HCT116 (cell line): ENCODE measurements at regions of chr9 and their contacts with region 1.

Region 1: GRCh38 chr9:38692707-38693106 is 27.2 kb downstream of the FAM240B start:
- DNase-seq: no peak
- ATAC-seq: no peak
- H3K4me3 ChIP-seq: no peak overlapping the region
- H3K27ac ChIP-seq: no peak overlapping the region
- H3K4me1 ChIP-seq: peaks cover 3 to 8% of the 10 kb centered on the region in 2 experiments; a peak in 3 of 4 replicates
- H3K27me3 ChIP-seq: no peaks in the 10 kb centered on the region
- CTCF ChIP-seq: no peak
- POLR2A ChIP-seq: no peak
- RAD21 ChIP-seq: no peak

Region 2: DNA sequence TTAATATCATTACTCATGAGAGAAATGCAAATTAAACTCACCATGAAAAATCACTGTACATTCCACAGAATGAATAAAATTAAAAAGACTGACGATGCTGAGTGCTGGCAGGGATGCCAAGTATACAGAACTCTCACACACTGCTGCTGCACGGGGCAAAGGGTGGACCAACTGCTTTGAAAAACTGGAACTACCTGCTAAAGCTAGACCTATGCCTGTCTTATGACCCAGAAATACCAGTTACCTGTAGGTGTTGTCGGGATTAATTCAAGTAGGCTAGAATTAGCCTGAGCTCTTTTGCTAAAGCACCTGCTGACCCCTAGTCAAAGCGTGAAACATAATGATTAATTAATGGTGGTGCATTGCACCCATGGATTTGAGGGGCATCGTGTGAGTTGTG is 35.8 kb before region 1 on chr9:
- CTCF ChIA-PET with region 1: no interaction called
- POLR2A ChIA-PET with region 1: no interaction called
- RAD21 ChIA-PET with region 1: no interaction called
- intact Hi-C with region 1: no loop called
- DNase-seq: no peak
- ATAC-seq: no peak
- H3K4me3 ChIP-seq: no peak overlapping the region
- H3K27ac ChIP-seq: no peak overlapping the region
- H3K4me1 ChIP-seq: no peaks in the 10 kb centered on the region
- H3K27me3 ChIP-seq: no peaks in the 10 kb centered on the region; the same call in 1 of the 2 replicates
- CTCF ChIP-seq: no peak
- POLR2A ChIP-seq: no peak
- RAD21 ChIP-seq: no peak

Region 3: GRCh38 chr9:38671748-38672147 is 21.0 kb before region 1 on chr9:
- CTCF ChIA-PET with region 1: interaction called, 3 read pairs
- POLR2A ChIA-PET with region 1: no interaction called
- RAD21 ChIA-PET with region 1: no interaction called
- intact Hi-C with region 1: loop called (anchors 2 kb)
- DNase-seq: no peak
- ATAC-seq: no peak
- H3K4me3 ChIP-seq: peak overlapping the region in 1 of 2 experiments; percentile 48; a peak in 1 of 4 replicates
- H3K27ac ChIP-seq: no peak overlapping the region
- H3K4me1 ChIP-seq: peaks cover 17 to 21% of the 10 kb centered on the region in 2 experiments
- H3K27me3 ChIP-seq: no peaks in the 10 kb centered on the region; the same call in 1 of the 2 replicates
- CTCF ChIP-seq: no peak
- POLR2A ChIP-seq: no peak
- RAD21 ChIP-seq: no peak